Activated naive CD4-positive, alpha-beta T cell treated with anti-CD3 and anti-CD28 coated beads for 36 hours (primary cell): ENCODE measurements at regions of chr3 and their contacts with region 1.

Region 1: GRCh38 chr3:179015551-179016020 is 56.0 kb downstream of the ZMAT3 start:
- DNase-seq: peak; percentile 81
- H3K4me3 Mint-ChIP-seq: no peak overlapping the region
- H3K27ac Mint-ChIP-seq: no peak overlapping the region
- H3K4me1 Mint-ChIP-seq: peaks cover 35% of the 10 kb centered on the region
- H3K27me3 Mint-ChIP-seq: no peaks in the 10 kb centered on the region

Region 2: GRCh38 chr3:179000144-179000543 is 15.4 kb before region 1 on chr3:
- CTCF ChIA-PET with region 1: interaction called, 4 read pairs
- intact Hi-C with region 1: loop called (anchors 1 kb)
- DNase-seq: peak; percentile 12
- H3K4me3 Mint-ChIP-seq: no peak overlapping the region
- H3K27ac Mint-ChIP-seq: no peak overlapping the region
- H3K4me1 Mint-ChIP-seq: peaks cover 11% of the 10 kb centered on the region
- H3K27me3 Mint-ChIP-seq: no peaks in the 10 kb centered on the region

Region 3: GRCh38 chr3:179260949-179261765 is 245.6 kb after region 1 on chr3:
- CTCF ChIA-PET with region 1: interaction called, 3 read pairs
- intact Hi-C with region 1: loop called (anchors 5 kb)
- DNase-seq: peak; percentile 69
- H3K4me3 Mint-ChIP-seq: peak overlapping the region; percentile 63
- H3K27ac Mint-ChIP-seq: no peak overlapping the region
- H3K4me1 Mint-ChIP-seq: peaks cover 12% of the 10 kb centered on the region
- H3K27me3 Mint-ChIP-seq: peaks cover 2% of the 10 kb centered on the region

Region 4: DNA sequence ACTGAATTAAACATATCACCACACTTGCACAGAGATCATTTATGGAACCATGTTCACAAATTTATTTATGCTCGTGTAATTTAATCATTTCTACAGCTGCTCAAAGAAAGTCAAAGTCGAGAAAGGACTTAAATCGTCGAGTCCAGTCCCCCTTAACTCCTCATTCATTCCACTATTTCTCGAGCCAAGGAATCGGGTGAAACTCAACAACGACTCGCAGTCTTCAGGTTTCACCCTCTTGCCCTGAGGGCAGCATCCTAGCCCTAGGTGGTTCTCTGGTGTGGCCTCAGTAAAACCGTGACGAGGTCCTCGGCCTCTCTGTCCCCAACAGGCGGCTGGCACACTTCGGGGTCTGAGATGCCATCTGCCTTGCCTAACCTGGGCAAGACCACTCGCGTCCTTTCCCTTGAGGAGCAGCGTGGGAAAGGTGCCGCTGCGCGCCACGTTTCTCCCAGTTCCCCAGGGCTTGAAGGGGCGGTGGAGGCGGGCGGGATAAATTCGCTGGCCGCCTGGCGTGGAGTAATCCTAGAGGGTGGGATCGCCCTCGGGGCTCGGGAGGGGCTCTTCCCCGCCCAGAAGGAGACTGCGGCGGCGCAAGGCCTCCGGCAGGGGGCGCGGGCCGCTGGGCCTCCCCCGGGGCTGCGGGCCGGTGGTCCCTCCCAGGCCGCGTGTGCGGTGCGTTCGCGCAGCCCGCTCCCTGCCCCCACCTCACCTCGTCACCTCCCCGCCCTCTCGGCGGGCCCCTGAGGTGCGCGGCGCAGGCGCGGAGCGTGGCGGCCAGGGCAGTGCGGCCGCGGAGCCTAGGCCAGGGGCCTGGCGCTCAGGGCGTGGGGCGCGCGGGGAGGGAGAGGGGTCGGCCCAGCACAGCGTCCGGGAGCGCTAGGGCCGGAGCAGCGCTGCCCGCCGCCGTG is 307.0 kb after region 1 on chr3 and contains the start of gene ZNF639:
- CTCF ChIA-PET with region 1: interaction called, 14 read pairs
- intact Hi-C with region 1: loop called (anchors 1 kb)
- DNase-seq: peak; percentile 78
- H3K4me3 Mint-ChIP-seq: peak within 1 kb of the TSS; percentile 89
- H3K27ac Mint-ChIP-seq: peak within 1 kb of the TSS; percentile 93
- H3K4me1 Mint-ChIP-seq: peaks cover 26% of the 10 kb centered on the region
- H3K27me3 Mint-ChIP-seq: no peaks in the 10 kb centered on the region
- total RNA-seq, gene ZNF639: 23.3 to 26.0 TPM

Region 5: GRCh38 chr3:179604321-179605078 is 588.9 kb after region 1 on chr3 and contains the starts of genes MRPL47 and NDUFB5:
- CTCF ChIA-PET with region 1: no interaction called
- intact Hi-C with region 1: loop called (anchors 2 kb)
- DNase-seq: peak; percentile 96
- H3K4me3 Mint-ChIP-seq: peak within 1 kb of the TSS; percentile 100
- H3K27ac Mint-ChIP-seq: peak within 1 kb of the TSS; percentile 99
- H3K4me1 Mint-ChIP-seq: peaks cover 48% of the 10 kb centered on the region
- H3K27me3 Mint-ChIP-seq: no peaks in the 10 kb centered on the region
- total RNA-seq, gene MRPL47: 48.8 to 50.4 TPM
- total RNA-seq, gene NDUFB5: 148 to 151 TPM